PC-3 (cell line): ENCODE measurements at regions of chr12 and their contacts with region 1.

Region 1: DNA sequence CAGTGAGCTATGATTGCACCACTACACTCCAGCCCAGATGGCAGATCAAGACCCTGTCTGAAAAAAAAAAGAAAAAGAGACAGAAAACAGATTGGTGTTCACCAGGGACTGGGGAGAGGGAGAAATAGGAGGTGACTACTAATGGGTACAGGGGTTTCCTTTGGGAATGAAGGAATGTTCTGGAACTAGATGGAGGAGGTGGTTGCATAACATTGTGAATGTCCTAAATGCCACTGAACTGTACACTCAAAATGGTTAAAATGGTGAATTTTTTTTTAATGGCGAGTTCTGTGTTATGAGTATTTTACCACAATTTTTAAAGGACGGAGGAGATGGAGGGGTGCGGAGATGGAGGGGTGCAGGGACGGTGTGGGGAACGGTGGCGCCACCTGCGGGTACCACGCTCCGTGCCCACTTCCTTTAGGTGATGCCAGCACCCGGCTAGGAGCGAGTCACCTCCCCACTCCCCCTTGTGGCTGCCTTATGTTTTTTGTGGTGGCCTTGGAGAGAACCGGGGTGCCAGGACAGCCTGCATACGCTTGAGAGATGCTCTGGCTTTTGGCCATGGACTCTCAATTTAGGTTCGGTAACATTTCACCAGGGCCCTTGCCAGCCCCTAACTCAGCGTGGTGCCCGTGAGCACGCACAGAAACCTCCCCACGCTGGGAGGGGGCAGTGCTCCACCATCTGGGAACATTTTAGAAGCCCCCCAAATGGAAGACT is 16.1 kb downstream of the UBC start:
- DNase-seq: peak; percentile 69
- ATAC-seq: peak; percentile 90
- H3K4me3 ChIP-seq: no peak overlapping the region
- H3K27ac ChIP-seq: no peak overlapping the region
- H3K4me1 ChIP-seq: no peaks in the 10 kb centered on the region
- H3K27me3 ChIP-seq: no peaks in the 10 kb centered on the region
- CTCF ChIP-seq: peak; percentile 86

Region 2: GRCh38 chr12:124829008-124829707 is 69.2 kb before region 1 on chr12:
- CTCF ChIA-PET with region 1: no interaction called
- POLR2A ChIA-PET with region 1: no interaction called
- intact Hi-C with region 1: loop called (anchors 2 kb)
- DNase-seq: peak; percentile 91
- ATAC-seq: peak; percentile 68
- H3K4me3 ChIP-seq: 0 out of 2 replicates have a peak overlapping the region, but pooled peaks have one; percentile 4
- H3K27ac ChIP-seq: peak overlapping the region; percentile 78
- H3K4me1 ChIP-seq: peaks cover 23% of the 10 kb centered on the region
- H3K27me3 ChIP-seq: no peaks in the 10 kb centered on the region
- CTCF ChIP-seq: no peak; the same call in 1 of the 2 replicates